Activated CD4-positive, alpha-beta T cell treated with anti-CD3 and anti-CD28 coated beads for 36 hours (primary cell): ENCODE measurements at regions of chr2 and their contacts with region 1.

Region 1: DNA sequence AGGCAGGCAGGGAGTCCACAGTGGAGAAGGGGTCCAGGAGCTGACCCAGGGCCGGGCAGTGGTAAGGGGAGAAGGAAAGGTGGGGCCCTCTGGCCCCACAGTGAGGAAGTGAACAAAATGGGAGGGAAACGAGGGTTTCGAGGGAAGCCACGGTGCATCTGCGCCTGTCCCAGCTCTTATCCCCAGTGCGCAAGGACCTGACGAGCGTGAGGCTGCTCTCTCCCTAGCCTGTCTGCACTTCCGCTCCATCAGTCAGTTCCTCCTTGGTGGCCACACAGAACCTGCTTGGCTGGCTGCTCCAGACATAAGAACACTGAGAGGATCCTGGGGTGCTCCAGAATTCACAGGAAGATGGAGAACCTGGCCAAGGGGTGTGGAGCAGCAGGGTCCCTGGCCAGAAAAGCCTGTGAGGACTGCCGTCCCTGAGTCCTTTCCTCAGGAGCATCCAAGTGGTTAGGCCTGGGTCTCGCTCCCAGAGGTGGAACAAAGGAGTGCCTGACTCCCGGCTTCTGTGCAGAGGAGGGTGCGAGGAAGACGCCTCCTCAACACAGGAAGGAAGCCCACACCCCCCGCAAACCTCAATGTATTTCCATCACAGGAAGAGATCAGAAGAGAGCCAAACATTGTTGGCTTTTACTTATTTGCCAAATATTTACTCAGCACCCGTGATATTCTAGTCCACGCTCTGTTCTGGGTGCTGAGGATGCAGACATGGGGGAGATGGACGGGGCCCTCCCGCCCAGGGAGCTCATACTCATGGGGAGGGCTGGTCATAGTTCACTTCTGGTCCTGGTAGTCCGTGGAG is 43.7 kb upstream of the SEMA4C start:
- DNase-seq: peak; percentile 72
- ATAC-seq: peak; percentile 96
- H3K4me3 Mint-ChIP-seq: peak overlapping the region; percentile 31
- H3K27ac Mint-ChIP-seq: peak overlapping the region; percentile 84
- H3K4me1 Mint-ChIP-seq: peaks cover 54% of the 10 kb centered on the region
- H3K27me3 Mint-ChIP-seq: no peaks in the 10 kb centered on the region

Region 2: DNA sequence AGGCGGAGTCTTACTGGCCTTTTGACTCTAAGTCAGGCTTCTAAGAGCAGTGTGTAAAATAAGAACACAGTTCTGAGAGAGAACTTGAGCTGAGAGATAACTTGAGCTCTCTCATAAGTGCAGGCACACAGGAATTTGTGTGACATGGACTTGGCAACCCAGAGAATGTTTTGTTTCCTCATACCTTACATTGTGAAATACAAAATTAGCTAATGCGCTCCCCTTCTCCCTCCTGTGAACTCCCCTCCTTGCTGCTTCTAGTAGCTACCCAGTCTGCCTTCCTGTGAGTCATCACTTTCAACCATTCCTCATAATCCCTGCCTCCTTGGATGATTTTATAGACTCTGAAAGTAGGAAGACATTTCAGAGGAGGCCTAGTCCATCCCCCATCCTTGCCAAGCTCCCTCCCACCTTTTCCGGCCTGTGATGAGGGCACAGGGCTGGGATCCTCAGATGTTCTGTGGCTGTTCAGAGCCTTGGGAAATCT is 248.5 kb before region 1 on chr2:
- CTCF ChIA-PET with region 1: no interaction called
- POLR2A ChIA-PET with region 1: no interaction called
- intact Hi-C with region 1: no loop called
- DNase-seq: no peak
- ATAC-seq: no peak
- H3K4me3 Mint-ChIP-seq: no peak overlapping the region
- H3K27ac Mint-ChIP-seq: no peak overlapping the region
- H3K4me1 Mint-ChIP-seq: no peaks in the 10 kb centered on the region
- H3K27me3 Mint-ChIP-seq: no peaks in the 10 kb centered on the region

Region 3: DNA sequence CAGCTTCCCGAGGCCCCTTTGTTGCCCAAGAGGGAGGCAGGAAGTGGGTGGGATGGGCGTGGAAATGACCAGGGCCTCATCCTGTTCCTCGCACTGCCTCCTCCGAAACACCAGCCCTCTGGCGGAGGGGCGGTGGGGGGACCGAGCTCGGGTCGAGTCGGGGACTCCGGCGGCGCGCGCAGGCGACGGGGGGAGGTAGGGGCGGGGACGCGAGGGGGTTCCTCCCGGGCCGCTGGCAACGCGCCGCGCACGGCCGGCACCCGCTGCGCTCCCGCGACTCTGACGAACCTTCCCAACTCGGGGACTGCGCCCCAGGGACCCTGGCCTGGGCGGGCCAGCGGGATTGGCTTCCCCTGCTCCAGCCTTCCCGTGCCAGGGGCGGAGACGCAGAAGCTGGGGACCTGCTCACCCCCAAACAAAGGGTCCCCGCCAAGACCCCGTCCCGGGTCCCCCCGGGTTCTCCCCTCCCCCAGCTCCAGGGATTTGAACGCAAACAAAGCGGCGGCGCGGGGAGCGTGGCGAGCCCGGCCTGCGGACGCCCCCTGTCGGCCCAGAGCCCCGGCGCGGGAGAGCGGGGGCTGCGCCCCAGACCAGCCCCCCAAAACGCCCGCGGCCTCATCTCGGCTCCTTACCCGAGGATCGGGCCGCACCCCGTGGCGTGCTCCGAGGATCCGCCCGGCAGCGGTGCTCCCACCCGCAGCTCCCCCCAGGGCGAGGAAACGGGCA is 44.9 kb before region 1 on chr2:
- CTCF ChIA-PET with region 1: no interaction called
- POLR2A ChIA-PET with region 1: no interaction called
- intact Hi-C with region 1: loop called (anchors 5 kb)
- DNase-seq: peak; percentile 77
- ATAC-seq: peak; percentile 52
- H3K4me3 Mint-ChIP-seq: peak overlapping the region; percentile 78
- H3K27ac Mint-ChIP-seq: peak overlapping the region; percentile 83
- H3K4me1 Mint-ChIP-seq: peaks cover 41% of the 10 kb centered on the region
- H3K27me3 Mint-ChIP-seq: peaks cover 6% of the 10 kb centered on the region

Region 4: GRCh38 chr2:96977631-96978195 is 64.1 kb after region 1 on chr2:
- CTCF ChIA-PET with region 1: no interaction called
- POLR2A ChIA-PET with region 1: no interaction called
- intact Hi-C with region 1: no loop called
- DNase-seq: peak; percentile 37
- ATAC-seq: peak; percentile 94
- H3K4me3 Mint-ChIP-seq: no peak overlapping the region
- H3K27ac Mint-ChIP-seq: no peak overlapping the region
- H3K4me1 Mint-ChIP-seq: peaks cover 11% of the 10 kb centered on the region
- H3K27me3 Mint-ChIP-seq: peaks cover 2% of the 10 kb centered on the region